ENCODE measurements at regions of chr3 and their contacts with region 1.

Region 1: DNA sequence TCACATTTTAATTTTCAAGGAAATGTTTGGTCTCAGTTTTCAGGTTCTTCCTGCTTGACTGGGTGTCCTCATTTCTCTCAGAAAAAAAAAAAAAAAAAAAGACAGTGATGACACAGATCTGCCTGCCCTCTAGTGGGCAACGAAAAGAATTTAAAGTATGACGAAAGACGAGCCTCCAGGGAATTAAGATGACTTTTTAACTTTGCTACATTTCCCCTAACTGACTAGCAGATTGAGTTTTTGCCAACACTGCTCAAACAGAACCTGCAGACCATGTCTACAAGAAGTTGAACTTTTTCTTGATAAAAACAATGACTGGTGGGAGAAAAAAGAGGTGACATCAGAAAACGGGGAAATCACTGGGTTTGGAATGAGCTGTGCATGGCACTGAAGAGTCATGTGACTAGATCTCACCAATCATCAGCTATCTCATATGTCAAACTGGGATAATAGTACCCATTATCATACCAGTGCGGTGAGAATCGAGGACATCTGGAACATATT is 40.8 kb downstream of the EOMES start:
- DNase-seq: no peak
- H3K4me3 ChIP-seq: no peak overlapping the region
- H3K27ac ChIP-seq: peak overlapping the region; percentile 50
- H3K4me1 ChIP-seq: peaks cover 21% of the 10 kb centered on the region
- H3K27me3 ChIP-seq: no peaks in the 10 kb centered on the region
- CTCF ChIP-seq: peak in 2 of 3 experiments; percentile 58 to 72
- POLR2A ChIP-seq: no peak

Region 2: DNA sequence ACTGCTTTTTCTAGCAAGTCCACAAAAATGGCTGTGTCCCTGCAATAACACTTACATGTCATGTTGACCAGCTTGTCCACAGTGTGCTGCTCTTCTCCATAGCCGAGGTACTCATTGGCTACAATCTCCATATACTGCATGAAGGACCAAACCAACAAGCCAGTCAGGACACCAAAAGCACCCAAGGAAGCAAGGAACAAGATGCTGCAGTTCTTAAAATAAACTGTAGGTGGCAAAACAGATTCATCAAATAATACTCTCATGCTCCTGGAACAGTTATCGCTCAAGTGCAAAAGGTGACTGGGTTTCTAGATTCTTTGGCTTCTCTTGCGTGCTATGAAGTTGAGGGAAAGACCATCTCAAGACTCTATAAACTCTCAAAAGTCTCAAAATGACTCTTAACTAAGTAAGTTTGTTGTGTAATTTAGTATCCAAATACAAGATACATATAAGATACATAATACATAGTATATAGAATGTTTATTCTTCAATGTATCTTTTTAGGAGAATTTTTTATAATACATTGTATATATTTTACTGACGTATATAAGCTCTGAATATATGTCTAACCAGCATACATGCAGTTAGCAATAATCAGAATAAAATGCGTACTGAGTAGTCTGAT is 369.1 kb before region 1 on chr3:
- intact Hi-C with region 1: loop called (anchors 10 kb)
- DNase-seq: no peak
- H3K4me3 ChIP-seq: no peak overlapping the region
- H3K27ac ChIP-seq: no peak overlapping the region
- H3K4me1 ChIP-seq: no peaks in the 10 kb centered on the region
- H3K27me3 ChIP-seq: no peaks in the 10 kb centered on the region
- CTCF ChIP-seq: peak; percentile 63 to 81 (median 80)
- POLR2A ChIP-seq: no peak

Region 3: DNA sequence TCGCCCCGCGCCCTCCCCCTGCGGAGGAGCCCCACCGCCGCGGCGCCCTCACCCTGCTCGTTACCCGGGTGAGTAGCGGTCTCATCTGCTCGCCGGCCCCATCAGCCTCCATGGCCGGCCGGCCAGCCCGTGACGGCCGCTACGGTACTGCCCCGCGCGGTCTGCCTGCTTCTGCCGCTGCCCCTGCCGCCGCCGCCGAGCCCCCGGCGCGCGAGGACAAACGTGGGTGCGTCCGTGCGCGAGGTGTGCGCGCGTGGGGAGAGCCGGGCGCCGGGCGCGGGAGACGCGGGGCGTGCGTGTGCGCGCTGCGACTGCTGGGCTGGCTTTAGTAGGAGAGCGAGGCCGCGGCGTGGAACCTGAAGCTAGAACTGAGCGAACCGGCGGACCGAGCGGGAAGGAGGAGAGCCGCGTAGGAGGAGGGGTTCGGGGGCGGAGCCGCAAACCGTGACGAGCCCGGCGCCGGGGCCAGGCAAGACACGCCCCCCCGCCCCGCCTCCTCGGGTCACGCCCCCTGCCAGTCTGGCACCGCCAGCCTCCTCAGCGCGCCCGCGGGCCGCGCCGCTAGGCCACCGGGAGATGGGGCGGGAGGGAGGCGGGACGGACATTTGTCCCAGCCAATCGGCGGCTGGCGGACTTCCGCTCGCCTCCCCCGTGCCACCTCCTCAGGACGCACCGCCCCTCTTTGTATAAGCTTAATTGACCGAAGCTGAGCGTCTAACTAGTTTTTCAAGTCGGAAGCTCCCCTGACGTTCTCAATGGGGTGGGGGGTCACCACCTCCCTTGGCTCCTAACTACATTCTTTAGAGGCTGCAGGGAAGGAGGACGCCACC is 197.1 kb before region 1 on chr3 and contains the start of gene SLC4A7:
- intact Hi-C with region 1: loop called (anchors 10 kb)
- DNase-seq: peak; percentile 96 to 98
- H3K4me3 ChIP-seq: peak within 1 kb of the TSS; percentile 70 to 87
- H3K27ac ChIP-seq: peak within 1 kb of the TSS; percentile 98
- H3K4me1 ChIP-seq: peaks cover 38% of the 10 kb centered on the region
- H3K27me3 ChIP-seq: no peaks in the 10 kb centered on the region
- CTCF ChIP-seq: no peak
- POLR2A ChIP-seq: peak; percentile 69 to 98
- total RNA-seq, gene SLC4A7: 61.1 TPM

Region 4: GRCh38 chr3:27657404-27657803 is 23.9 kb before region 1 on chr3:
- intact Hi-C with region 1: no loop called
- DNase-seq: no peak
- H3K4me3 ChIP-seq: no peak overlapping the region
- H3K27ac ChIP-seq: no peak overlapping the region
- H3K4me1 ChIP-seq: no peaks in the 10 kb centered on the region
- H3K27me3 ChIP-seq: no peaks in the 10 kb centered on the region
- CTCF ChIP-seq: no peak
- POLR2A ChIP-seq: no peak